H1 (cell line): ENCODE measurements at regions of chr3 and their contacts with region 1.

Region 1: GRCh38 chr3:171383206-171384018 is 76.8 kb downstream of the TNIK start:
- DNase-seq: no peak
- H3K4me3 ChIP-seq: no peak overlapping the region
- H3K27ac ChIP-seq: no peak overlapping the region
- H3K4me1 ChIP-seq: peaks cover 0 to 23% (median 18%) of the 10 kb centered on the region in 4 experiments; a peak in 4 of 7 replicates
- H3K27me3 ChIP-seq: no peaks in the 10 kb centered on the region
- CTCF ChIP-seq: no peak
- EP300 ChIP-seq: no peak
- POLR2A ChIP-seq: no peak
- RAD21 ChIP-seq: no peak

Region 2: DNA sequence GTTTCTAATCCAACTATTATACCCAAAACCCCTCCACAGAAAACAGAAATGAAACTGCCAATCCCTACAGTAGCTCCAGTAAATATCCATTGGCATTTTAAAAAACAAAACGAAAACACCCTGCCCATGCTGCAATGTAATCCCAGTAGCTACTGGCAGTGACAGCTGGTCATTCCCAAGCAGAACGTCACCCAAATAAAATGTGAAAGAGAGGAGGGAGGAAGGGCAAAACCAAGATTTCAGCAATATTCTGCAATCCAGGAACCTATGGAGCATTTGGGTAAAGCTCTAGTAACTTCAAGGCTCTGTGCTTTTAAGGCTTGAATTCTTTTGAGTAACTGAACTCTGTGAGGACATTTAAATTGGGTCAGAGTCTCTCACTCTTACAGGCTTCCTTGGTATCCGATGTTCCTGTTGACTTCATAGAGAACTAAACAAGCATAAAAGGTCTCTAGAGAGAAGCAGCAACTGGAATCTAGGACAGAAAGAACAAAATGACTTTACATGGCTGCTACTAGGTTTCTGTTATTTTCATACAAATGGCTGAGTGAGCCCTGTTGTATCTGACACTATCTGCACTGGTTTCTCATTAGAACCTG is 59.4 kb before region 1 on chr3:
- CTCF ChIA-PET with region 1: no interaction called
- POLR2A ChIA-PET with region 1: no interaction called
- DNase-seq: no peak
- H3K4me3 ChIP-seq: no peak overlapping the region
- H3K27ac ChIP-seq: no peak overlapping the region
- H3K4me1 ChIP-seq: peaks cover 0 to 3% (median 3%) of the 10 kb centered on the region in 4 experiments; a peak in 3 of 7 replicates
- H3K27me3 ChIP-seq: no peaks in the 10 kb centered on the region
- CTCF ChIP-seq: no peak
- EP300 ChIP-seq: no peak
- POLR2A ChIP-seq: no peak
- RAD21 ChIP-seq: no peak

Region 3: GRCh38 chr3:171372694-171373093 is 10.7 kb before region 1 on chr3:
- CTCF ChIA-PET with region 1: interaction called, 18 read pairs
- POLR2A ChIA-PET with region 1: interaction called, 3 read pairs
- DNase-seq: no peak
- H3K4me3 ChIP-seq: no peak overlapping the region
- H3K27ac ChIP-seq: no peak overlapping the region
- H3K4me1 ChIP-seq: peaks cover 0 to 5% (median 2%) of the 10 kb centered on the region in 4 experiments; a peak in 2 of 7 replicates
- H3K27me3 ChIP-seq: no peaks in the 10 kb centered on the region
- CTCF ChIP-seq: no peak
- EP300 ChIP-seq: no peak
- POLR2A ChIP-seq: no peak
- RAD21 ChIP-seq: no peak

Region 4: GRCh38 chr3:171453178-171453886 is 69.9 kb after region 1 on chr3:
- CTCF ChIA-PET with region 1: interaction called, 11 read pairs
- POLR2A ChIA-PET with region 1: no interaction called
- DNase-seq: peak in 1 of 2 experiments; percentile 83
- H3K4me3 ChIP-seq: peak overlapping the region in 2 of 4 experiments; percentile 23 to 47; a peak in 3 of 8 replicates
- H3K27ac ChIP-seq: no peak overlapping the region
- H3K4me1 ChIP-seq: peaks cover 8 to 29% (median 18%) of the 10 kb centered on the region in 4 experiments; a peak in 5 of 7 replicates
- H3K27me3 ChIP-seq: no peaks in the 10 kb centered on the region
- CTCF ChIP-seq: peak; percentile 70 to 82 (median 73)
- EP300 ChIP-seq: no peak
- POLR2A ChIP-seq: no peak
- RAD21 ChIP-seq: peak; percentile 62 to 79